IMR-90 (cell line): ENCODE measurements at regions of chr2 and their contacts with region 1.

Region 1: DNA sequence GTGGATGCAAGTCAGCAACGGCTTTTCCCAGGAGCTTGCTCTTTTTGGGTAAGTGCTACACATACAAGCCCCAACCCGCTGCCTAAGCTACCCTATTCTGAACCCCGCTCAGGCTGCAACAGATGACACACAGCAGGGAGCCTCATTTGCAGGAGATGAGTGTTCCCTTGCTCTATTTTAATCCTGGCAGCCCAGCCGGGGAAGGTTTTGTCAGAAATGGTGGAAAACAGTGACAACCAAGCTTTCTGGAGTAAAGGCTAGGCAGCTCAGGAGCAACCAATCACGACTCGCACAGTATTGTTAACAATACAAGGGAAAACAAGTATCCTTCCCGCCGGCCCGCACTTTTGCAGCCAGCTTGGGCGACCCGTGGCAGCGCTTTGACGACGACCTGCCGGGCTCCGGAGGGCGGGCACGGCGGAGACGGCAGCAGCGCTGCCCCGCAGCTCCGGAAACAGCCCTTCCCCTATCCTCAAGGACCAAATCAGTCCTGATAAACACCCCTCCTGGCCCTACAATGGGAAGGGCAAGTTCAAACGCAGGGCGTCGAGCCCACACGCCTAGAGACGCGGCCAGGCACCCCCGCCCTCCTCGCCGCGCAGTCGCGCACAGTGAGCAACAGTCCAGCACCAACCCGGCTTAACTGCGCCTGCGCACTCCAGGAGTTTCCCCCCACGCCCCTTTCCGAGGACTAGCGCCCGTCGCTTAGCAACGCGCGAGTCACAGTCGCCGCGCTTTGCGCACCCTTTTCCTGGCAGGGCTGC is 74.3 kb upstream of the TSPYL6 start:
- DNase-seq: peak; percentile 92
- ATAC-seq: peak; percentile 99
- H3K4me3 ChIP-seq: peak overlapping the region; percentile 78
- H3K27ac ChIP-seq: peak overlapping the region; percentile 70
- H3K4me1 ChIP-seq: peaks cover 3% of the 10 kb centered on the region
- H3K27me3 ChIP-seq: no peaks in the 10 kb centered on the region
- CTCF ChIP-seq: no peak
- POLR2A ChIP-seq: peak; percentile 68
- RAD21 ChIP-seq: no peak

Region 2: DNA sequence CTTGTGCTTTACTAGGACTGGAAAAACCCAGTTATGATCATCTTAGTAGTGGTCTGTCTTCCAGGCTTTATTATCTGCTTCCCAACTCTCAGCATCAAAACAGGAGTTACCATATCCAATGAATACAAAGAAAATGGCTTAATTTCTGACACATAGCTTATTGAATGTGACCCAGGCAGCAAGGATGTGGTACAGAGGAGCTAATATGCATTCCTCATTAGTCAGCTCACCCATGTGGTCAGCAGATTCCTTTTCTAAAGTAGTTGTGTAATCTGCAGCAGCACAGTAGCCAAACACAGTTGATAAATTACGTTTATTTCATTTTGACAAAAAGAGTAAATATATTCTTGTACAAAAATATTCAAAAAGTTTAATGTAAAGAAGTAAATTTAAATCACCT is 117.9 kb before region 1 on chr2:
- CTCF ChIA-PET with region 1: interaction called, 3 read pairs
- POLR2A ChIA-PET with region 1: no interaction called
- dilution Hi-C with region 1: no loop called
- in situ Hi-C with region 1: no loop called
- intact Hi-C with region 1: loop called (anchors 1 kb)
- DNase-seq: peak; percentile 96
- ATAC-seq: peak; percentile 93
- H3K4me3 ChIP-seq: no peak overlapping the region
- H3K27ac ChIP-seq: no peak overlapping the region
- H3K4me1 ChIP-seq: peaks cover 6% of the 10 kb centered on the region; the same call in 1 of the 2 replicates
- H3K27me3 ChIP-seq: no peaks in the 10 kb centered on the region
- CTCF ChIP-seq: no peak
- POLR2A ChIP-seq: no peak
- RAD21 ChIP-seq: no peak